T-cell (primary cell): ENCODE measurements at regions of chr1 and their contacts with region 1.

Region 1: GRCh38 chr1:26169669-26170471 is at the start of gene ZNF593:
- DNase-seq: peak; percentile 48 to 87 (median 68)
- ATAC-seq: peak; percentile 89 to 93 (median 92)
- H3K4me3 ChIP-seq: peak within 1 kb of the TSS; percentile 77 to 93
- H3K4me3 Mint-ChIP-seq: peak within 1 kb of the TSS; percentile 81 to 85 (median 82)
- H3K27ac ChIP-seq: peak within 1 kb of the TSS; percentile 77
- H3K27ac Mint-ChIP-seq: peak within 1 kb of the TSS; percentile 66 to 79
- H3K4me1 ChIP-seq: peaks cover 0 to 25% of the 10 kb centered on the region in 2 experiments
- H3K4me1 Mint-ChIP-seq: peaks cover 11 to 26% (median 18%) of the 10 kb centered on the region in 3 donors
- H3K27me3 ChIP-seq: peaks cover 0 to 6% of the 10 kb centered on the region in 2 experiments
- H3K27me3 Mint-ChIP-seq: no peaks in the 10 kb centered on the region
- total RNA-seq, gene ZNF593: 8.5 to 17.7 (median 17.1) TPM

Region 2: DNA sequence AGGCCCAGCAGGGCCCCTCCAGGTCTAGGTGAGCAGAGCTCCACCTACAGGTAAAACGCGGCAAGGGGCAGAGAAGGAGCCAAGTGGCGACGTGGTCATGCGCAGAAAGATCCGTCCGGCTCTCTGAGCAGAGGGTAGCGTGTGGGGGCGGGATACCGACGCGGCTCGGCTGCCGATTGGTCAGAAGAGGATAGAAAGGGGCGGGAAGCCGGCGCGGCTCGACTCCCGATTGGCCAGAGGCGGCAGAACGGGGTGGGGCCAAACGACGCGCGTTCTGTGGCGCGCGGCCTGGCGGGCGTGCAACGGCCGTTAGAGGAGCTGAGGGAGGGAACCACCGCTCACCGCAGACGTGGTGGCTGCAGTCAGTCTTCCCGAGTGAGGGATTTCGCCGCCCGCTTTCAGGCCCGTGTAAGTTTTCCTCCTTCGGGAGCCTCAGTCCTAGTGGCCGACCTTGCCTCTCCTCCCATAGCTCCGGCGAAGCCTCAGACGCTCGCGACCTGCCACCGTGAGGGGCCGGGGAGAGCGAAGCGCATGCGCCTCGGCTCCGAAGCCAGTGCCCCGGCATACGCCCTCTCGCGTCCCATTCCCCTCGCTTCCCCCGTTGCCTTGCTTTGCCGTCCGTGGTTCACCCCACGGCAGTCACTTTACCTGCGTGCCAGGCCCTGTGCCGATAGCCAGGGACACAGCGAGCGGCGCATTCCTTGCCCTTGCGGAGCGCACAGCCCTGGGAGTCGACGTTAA is 64.2 kb after region 1 on chr1 and contains the start of gene CEP85:
- CTCF ChIA-PET with region 1: interaction called, 3 to 23 read pairs
- POLR2A ChIA-PET with region 1: no interaction called
- DNase-seq: peak; percentile 95 to 99 (median 98)
- ATAC-seq: peak; percentile 92 to 96 (median 94)
- H3K4me3 ChIP-seq: peak within 1 kb of the TSS; percentile 87 to 96
- H3K4me3 Mint-ChIP-seq: peak within 1 kb of the TSS; percentile 94 to 99 (median 99)
- H3K27ac ChIP-seq: peak within 1 kb of the TSS; percentile 79
- H3K27ac Mint-ChIP-seq: peak within 1 kb of the TSS; percentile 96
- H3K4me1 ChIP-seq: peaks cover 16 to 17% of the 10 kb centered on the region in 2 experiments
- H3K4me1 Mint-ChIP-seq: peaks cover 33 to 41% (median 38%) of the 10 kb centered on the region in 3 donors
- H3K27me3 ChIP-seq: no peaks in the 10 kb centered on the region
- H3K27me3 Mint-ChIP-seq: no peaks in the 10 kb centered on the region
- total RNA-seq, gene CEP85: 14.2 to 28.5 (median 20.7) TPM

Region 3: DNA sequence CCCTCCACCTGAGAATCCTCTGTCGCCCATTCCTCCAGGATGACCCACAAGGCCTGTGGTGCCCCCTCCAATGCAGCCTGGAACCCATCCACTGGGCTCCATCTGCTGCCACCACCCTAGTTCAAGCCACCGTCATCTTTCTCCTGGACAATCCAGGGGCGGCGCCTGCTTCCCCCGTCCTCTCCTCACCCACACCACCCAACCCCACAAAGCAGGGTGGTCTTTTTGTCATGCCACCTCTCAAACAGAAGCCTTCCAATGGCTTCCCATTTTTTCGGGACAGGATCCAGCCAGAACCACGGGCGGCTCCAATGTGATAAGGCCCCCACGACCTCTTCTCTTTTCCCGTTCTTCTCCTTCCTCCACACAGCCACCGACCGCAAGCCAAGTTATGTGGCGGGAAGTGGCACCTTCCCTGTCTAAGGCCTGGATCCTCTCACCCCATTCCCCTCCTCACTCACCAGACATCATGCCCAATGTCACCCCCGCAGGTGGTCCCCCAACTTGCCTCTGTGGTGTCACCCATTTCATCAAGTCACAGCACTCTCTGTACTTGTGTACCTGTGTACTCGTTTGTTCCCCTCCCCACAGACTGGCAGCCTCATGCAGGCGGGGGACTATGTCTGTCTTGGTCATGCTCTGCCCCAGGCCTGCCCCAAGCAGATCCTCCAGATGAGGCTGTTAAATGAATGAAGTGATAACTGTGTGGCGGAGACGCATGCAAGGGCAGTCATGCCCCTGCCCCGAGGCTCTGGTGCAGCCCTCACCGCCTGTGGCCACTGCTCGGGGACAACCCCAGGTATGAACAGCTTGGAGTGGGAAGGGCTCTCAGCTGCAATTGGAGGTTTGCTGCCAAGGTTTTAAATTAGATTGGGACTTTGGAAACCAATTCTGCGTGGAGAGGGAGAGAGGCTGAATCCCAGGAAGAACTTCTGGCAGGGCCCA is 125.6 kb after region 1 on chr1:
- CTCF ChIA-PET with region 1: no interaction called
- POLR2A ChIA-PET with region 1: no interaction called
- DNase-seq: no peak
- ATAC-seq: no peak
- H3K4me3 ChIP-seq: no peak overlapping the region
- H3K4me3 Mint-ChIP-seq: no peak overlapping the region
- H3K27ac ChIP-seq: no peak overlapping the region
- H3K27ac Mint-ChIP-seq: peak overlapping the region; percentile 67 to 86
- H3K4me1 ChIP-seq: peaks cover 13 to 41% of the 10 kb centered on the region in 2 experiments
- H3K4me1 Mint-ChIP-seq: peaks cover 30 to 58% (median 56%) of the 10 kb centered on the region in 3 donors
- H3K27me3 ChIP-seq: no peaks in the 10 kb centered on the region
- H3K27me3 Mint-ChIP-seq: no peaks in the 10 kb centered on the region